AG04449 (cell line): ENCODE measurements at regions of chr4 and their contacts with region 1.

Region 1: DNA sequence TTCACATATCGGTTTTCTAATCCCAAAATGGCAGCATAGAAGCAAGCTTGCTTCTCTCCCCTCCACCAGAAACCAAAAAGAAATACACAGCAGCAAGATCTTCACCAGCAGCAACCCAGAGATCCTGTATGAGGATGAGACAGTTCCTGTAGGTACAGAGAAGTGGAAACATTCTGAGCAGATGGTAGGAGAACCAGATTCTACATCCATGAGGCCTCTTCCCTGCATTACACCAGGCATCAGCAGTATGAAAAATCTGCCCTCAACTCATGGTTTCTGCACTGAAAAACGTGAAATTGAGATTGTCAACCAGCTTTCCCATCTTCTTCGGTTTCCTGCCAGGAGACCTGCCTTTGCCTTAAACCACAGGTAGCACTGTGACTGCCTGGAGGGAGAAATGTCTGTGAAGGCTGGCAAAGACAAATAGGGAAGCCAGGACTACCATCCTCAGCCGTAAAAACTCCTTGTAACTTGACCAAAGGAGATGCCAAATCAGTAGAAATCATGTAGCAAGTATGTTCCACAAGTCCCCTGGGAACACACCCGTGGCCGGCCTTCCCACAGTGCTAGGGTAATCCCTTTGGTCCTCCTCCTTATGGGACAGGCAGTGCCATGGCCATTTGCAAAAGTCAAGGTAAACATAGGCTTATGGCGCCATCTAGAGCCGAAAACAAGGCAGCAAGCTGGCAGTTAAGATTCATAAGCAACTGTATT is 24.0 kb upstream of the MTHFD2L start:
- DNase-seq: peak; percentile 73
- H3K4me3 ChIP-seq: no peak overlapping the region
- CTCF ChIP-seq: peak; percentile 75

Region 2: GRCh38 chr4:73341454-73341853 is 792.5 kb before region 1 on chr4:
- CTCF ChIA-PET with region 1: interaction called, 13 read pairs
- POLR2A ChIA-PET with region 1: no interaction called
- DNase-seq: no peak
- H3K4me3 ChIP-seq: no peak overlapping the region
- CTCF ChIP-seq: peak; percentile 41

Region 3: DNA sequence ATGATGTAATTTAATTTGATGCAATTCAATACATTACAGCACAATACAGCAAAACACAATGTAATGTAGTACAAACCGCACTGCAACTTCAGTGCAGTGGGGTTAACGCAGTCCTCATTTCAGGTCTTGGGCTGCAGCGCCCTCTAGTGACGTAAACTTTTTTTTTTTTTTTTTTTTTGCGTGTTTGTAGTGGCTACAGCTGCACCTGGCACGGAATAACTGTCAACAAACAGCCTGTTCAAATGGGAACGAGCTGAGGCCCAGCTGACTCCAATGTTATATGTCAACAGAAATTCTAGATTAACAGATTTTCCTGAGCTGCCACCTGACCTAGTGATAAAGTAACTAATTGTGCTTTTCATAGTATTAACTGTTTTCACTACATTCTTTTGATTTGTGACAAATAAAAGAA is 480.2 kb before region 1 on chr4:
- CTCF ChIA-PET with region 1: interaction called, 25 read pairs
- POLR2A ChIA-PET with region 1: no interaction called
- DNase-seq: no peak
- H3K4me3 ChIP-seq: no peak overlapping the region
- CTCF ChIP-seq: peak; percentile 34

Region 4: GRCh38 chr4:73729534-73730165 is 404.3 kb before region 1 on chr4:
- CTCF ChIA-PET with region 1: interaction called, 32 read pairs
- POLR2A ChIA-PET with region 1: no interaction called
- DNase-seq: peak; percentile 63
- H3K4me3 ChIP-seq: no peak overlapping the region
- CTCF ChIP-seq: peak; percentile 84

Region 5: GRCh38 chr4:73998040-73999011 is 135.6 kb before region 1 on chr4 and contains the start of gene CXCL5:
- CTCF ChIA-PET with region 1: interaction called, 15 read pairs
- POLR2A ChIA-PET with region 1: no interaction called
- DNase-seq: no peak
- H3K4me3 ChIP-seq: peak within 1 kb of the TSS; percentile 51
- CTCF ChIP-seq: peak; percentile 26

Region 6: GRCh38 chr4:74117024-74117534 is 16.9 kb before region 1 on chr4:
- CTCF ChIA-PET with region 1: interaction called, 38 read pairs
- POLR2A ChIA-PET with region 1: no interaction called
- DNase-seq: peak; percentile 70
- H3K4me3 ChIP-seq: no peak overlapping the region
- CTCF ChIP-seq: no peak

Region 7: GRCh38 chr4:74152836-74153235 is 18.9 kb after region 1 on chr4:
- CTCF ChIA-PET with region 1: interaction called, 12 read pairs
- POLR2A ChIA-PET with region 1: interaction called, 3 read pairs
- DNase-seq: no peak
- H3K4me3 ChIP-seq: no peak overlapping the region
- CTCF ChIP-seq: no peak

Region 8: GRCh38 chr4:74376888-74377483 is 243.0 kb after region 1 on chr4:
- CTCF ChIA-PET with region 1: no interaction called
- POLR2A ChIA-PET with region 1: no interaction called
- DNase-seq: no peak
- H3K4me3 ChIP-seq: no peak overlapping the region
- CTCF ChIP-seq: peak; percentile 38